ENCODE measurements at regions of chr3 and their contacts with region 1.

Region 1: DNA sequence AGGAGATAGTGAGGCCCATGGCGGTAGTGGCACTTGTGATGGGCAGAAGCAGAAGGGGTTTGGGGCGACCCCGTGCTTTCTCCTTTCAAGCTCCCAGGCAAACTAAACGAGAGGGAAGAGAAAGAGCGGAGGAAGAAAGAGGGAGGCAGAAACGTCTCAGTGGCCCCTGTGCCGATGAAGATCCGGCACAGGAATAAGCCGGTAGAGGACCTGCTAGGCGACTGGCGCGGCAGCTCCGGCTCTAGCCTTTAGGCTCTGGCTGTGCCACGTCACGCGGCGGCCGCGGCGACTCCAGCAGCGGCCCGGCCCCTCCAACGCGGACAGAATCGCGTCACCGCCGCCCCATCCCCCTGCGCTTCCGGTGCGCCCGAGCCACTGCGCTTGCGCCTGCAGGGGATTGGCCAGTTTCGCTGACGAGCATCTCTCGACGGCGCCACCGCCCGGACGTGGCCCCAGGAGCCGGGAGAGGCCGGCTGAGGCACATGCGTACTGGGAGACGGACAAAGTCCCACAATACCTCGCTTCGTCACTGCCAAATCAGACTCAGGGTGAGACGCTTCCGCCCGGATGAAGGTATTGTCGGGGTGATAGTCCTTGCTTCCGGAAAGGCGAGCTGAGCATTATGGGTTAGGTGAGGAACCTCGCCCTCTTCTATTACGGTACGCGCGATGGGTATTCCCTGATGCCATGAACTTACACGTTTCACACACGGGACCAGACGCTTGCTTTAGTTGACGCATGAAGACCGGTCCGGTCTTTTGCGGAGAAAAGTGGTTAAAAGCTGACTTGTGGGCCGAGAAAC is at the start of gene ARF4:
- DNase-seq: peak; percentile 100
- H3K4me3 ChIP-seq: peak within 1 kb of the TSS; percentile 67 to 89 (median 72)
- H3K27ac ChIP-seq: peak within 1 kb of the TSS; percentile 91 to 99 (median 94)
- H3K4me1 ChIP-seq: peaks cover 47 to 50% (median 48%) of the 10 kb centered on the region in 4 donors
- H3K27me3 ChIP-seq: no peaks in the 10 kb centered on the region
- CTCF ChIP-seq: peak in 2 of 3 experiments; percentile 18 to 37
- EP300 ChIP-seq: no peak
- POLR2A ChIP-seq: peak; percentile 98
- total RNA-seq, gene ARF4: 75.1 to 104 (median 84.1) TPM

Region 2: DNA sequence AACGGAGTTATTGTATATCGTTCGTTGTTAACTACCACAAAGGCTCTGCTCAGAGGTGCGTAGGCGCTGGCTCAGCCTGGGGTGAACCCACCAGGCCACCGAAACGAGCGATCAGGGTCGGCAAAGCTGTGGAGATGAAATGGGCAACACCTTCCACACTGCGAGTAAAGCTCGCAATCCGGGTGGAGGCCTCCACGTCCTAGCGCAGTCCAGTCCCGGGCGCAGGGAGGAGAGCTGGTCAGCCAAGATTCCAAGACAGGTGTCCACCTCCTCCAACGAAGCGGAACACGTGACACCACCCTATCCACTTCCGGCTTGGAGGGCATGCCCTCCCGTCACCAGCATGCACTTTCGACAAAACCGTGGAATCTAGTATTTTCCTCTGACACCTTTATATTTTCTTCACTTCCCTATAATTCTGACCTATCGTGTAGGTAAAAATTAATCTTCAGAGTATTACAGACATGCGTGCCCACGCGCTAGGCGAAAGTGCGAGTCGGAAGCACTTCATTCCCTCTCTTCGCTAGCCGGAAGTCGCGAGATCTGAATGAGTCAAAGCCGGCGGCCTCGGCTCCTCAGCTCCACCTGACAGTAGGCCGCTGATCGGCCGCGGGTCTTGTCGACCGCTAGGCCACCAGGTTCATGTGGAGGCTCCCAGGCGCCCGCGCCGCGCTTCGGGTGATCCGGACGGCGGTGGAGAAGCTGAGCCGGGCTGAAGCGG is 41.4 kb before region 1 on chr3 and contains the start of gene PDE12:
- intact Hi-C with region 1: loop called (anchors 2 kb)
- DNase-seq: peak; percentile 96
- H3K4me3 ChIP-seq: peak within 1 kb of the TSS; percentile 81 to 95 (median 87)
- H3K27ac ChIP-seq: peak within 1 kb of the TSS; percentile 89 to 95 (median 94)
- H3K4me1 ChIP-seq: peaks cover 28 to 51% (median 43%) of the 10 kb centered on the region in 4 donors
- H3K27me3 ChIP-seq: no peaks in the 10 kb centered on the region
- CTCF ChIP-seq: peak in 1 of 3 experiments; percentile 5
- EP300 ChIP-seq: no peak
- POLR2A ChIP-seq: peak; percentile 79
- total RNA-seq, gene PDE12: 19.0 to 26.5 (median 22.4) TPM

Region 3: GRCh38 chr3:57692259-57693147 is 95.2 kb after region 1 on chr3 and contains the start of gene DENND6A:
- intact Hi-C with region 1: loop called (anchors 5 kb)
- DNase-seq: peak; percentile 96
- H3K4me3 ChIP-seq: peak within 1 kb of the TSS; percentile 82 to 93 (median 88)
- H3K27ac ChIP-seq: peak within 1 kb of the TSS; percentile 97 to 99 (median 98)
- H3K4me1 ChIP-seq: peaks cover 29 to 47% (median 42%) of the 10 kb centered on the region in 4 donors
- H3K27me3 ChIP-seq: no peaks in the 10 kb centered on the region
- CTCF ChIP-seq: peak in 1 of 3 experiments; percentile 12
- EP300 ChIP-seq: no peak
- POLR2A ChIP-seq: peak; percentile 97
- total RNA-seq, gene DENND6A: 24.6 to 47.2 (median 43.2) TPM

Region 4: DNA sequence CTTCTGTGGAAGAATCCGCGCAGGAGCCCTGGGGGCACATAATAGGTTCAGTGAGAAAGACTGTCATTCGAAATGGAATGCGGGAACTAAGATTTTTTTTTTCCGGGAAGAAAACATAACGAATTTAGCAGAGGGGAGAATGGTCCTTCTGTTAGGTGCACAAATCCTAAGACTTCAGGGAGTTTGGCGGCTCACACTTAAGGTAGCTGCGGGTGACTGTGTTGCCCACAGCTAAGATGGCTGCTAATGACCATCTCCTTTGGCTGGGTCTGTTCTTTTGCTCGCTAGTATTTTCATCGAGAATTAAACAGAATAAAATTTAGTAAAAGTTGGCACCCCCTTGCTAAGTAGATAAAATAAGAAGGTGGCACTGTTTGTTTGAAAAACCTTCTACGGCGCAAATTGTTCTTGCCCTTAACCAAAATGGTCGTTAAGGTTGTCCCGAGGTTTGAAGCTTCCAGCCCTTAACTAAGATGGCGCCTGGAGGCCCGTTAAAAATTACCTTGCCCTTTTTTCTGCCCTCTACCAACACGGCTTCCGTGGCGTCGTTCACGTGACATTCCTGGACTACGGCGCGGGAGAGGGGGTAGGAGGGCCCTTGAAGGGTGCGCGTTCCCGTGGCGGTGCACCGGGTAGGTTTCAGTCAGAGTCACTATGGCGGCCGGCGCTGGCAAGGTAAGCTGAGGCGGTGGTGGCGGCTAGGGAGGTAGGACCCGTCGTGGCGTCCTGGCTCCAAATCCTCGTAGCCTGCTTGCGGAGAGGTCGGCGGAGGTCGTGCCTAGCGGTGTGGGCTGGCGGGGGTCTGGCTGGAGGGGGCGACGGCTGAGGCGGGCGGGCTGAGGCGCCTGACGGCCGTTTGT is 158.6 kb after region 1 on chr3 and contains the start of gene SLMAP:
- intact Hi-C with region 1: loop called (anchors 5 kb)
- DNase-seq: peak; percentile 99
- H3K4me3 ChIP-seq: peak within 1 kb of the TSS; percentile 79 to 95 (median 94)
- H3K27ac ChIP-seq: peak within 1 kb of the TSS; percentile 88 to 93 (median 92)
- H3K4me1 ChIP-seq: peaks cover 38 to 46% (median 44%) of the 10 kb centered on the region in 4 donors
- H3K27me3 ChIP-seq: no peaks in the 10 kb centered on the region
- CTCF ChIP-seq: peak in 1 of 3 experiments; percentile 22
- EP300 ChIP-seq: no peak
- POLR2A ChIP-seq: peak; percentile 46
- total RNA-seq, gene SLMAP: 399 to 519 (median 464) TPM